ENCODE measurements at regions of chr1 and their contacts with region 1.

Region 1: GRCh38 chr1:187264995-187265602 is 436.4 kb downstream of the PLA2G4A start:
- DNase-seq: peak; percentile 12
- ATAC-seq: peak; percentile 78; the same call in 1 of the 2 replicates
- H3K4me3 ChIP-seq: no peak overlapping the region
- H3K27ac ChIP-seq: no peak overlapping the region
- H3K4me1 ChIP-seq: peaks cover under 1% of the 10 kb centered on the region; the same call in 1 of the 2 replicates
- H3K27me3 ChIP-seq: no peaks in the 10 kb centered on the region
- CTCF ChIP-seq: peak; percentile 72; the same call in 1 of the 2 replicates

Region 2: GRCh38 chr1:187051618-187052232 is 213.4 kb before region 1 on chr1:
- CTCF ChIA-PET with region 1: no interaction called
- POLR2A ChIA-PET with region 1: no interaction called
- in situ Hi-C with region 1: no loop called
- intact Hi-C with region 1: loop called (anchors 10 kb)
- DNase-seq: peak; percentile 33
- ATAC-seq: peak; percentile 68; the same call in 1 of the 2 replicates
- H3K4me3 ChIP-seq: no peak overlapping the region
- H3K27ac ChIP-seq: no peak overlapping the region
- H3K4me1 ChIP-seq: no peaks in the 10 kb centered on the region
- H3K27me3 ChIP-seq: no peaks in the 10 kb centered on the region
- CTCF ChIP-seq: peak; percentile 60; the same call in 1 of the 2 replicates

Region 3: GRCh38 chr1:187212377-187212776 is 52.7 kb before region 1 on chr1:
- CTCF ChIA-PET with region 1: no interaction called
- POLR2A ChIA-PET with region 1: no interaction called
- in situ Hi-C with region 1: no loop called
- intact Hi-C with region 1: no loop called
- DNase-seq: no peak
- ATAC-seq: no peak
- H3K4me3 ChIP-seq: no peak overlapping the region
- H3K27ac ChIP-seq: no peak overlapping the region
- H3K4me1 ChIP-seq: no peaks in the 10 kb centered on the region
- H3K27me3 ChIP-seq: no peaks in the 10 kb centered on the region
- CTCF ChIP-seq: no peak

Region 4: DNA sequence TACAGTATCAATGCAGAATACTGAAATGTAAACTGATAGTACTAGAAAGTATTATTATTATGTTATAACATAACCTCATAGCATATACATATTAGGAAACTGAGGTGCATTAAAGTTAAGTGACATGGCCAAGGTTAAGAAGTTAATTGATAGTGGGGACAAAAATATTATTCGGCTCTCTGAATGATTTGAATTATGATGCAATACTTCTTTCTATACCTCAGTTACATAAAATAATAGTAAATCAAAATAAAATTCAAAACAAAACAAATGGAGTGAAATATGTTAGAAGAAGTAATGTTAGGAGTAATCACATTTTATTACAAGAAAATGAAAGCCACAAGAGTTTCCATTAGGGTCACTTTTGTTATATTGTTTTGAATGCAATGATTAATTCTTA is 18.9 kb after region 1 on chr1:
- CTCF ChIA-PET with region 1: no interaction called
- POLR2A ChIA-PET with region 1: no interaction called
- in situ Hi-C with region 1: no loop called
- intact Hi-C with region 1: no loop called
- DNase-seq: no peak
- ATAC-seq: no peak
- H3K4me3 ChIP-seq: no peak overlapping the region
- H3K27ac ChIP-seq: no peak overlapping the region
- H3K4me1 ChIP-seq: no peaks in the 10 kb centered on the region
- H3K27me3 ChIP-seq: no peaks in the 10 kb centered on the region
- CTCF ChIP-seq: no peak